Cardiac septum (tissue), 1 donor: ENCODE measurements at regions of chr19 and their contacts with region 1.

Region 1: GRCh38 chr19:41993612-41994483 is at the start of gene ATP1A3:
- DNase-seq: no peak
- total RNA-seq, gene ATP1A3: 242 TPM

Region 2: DNA sequence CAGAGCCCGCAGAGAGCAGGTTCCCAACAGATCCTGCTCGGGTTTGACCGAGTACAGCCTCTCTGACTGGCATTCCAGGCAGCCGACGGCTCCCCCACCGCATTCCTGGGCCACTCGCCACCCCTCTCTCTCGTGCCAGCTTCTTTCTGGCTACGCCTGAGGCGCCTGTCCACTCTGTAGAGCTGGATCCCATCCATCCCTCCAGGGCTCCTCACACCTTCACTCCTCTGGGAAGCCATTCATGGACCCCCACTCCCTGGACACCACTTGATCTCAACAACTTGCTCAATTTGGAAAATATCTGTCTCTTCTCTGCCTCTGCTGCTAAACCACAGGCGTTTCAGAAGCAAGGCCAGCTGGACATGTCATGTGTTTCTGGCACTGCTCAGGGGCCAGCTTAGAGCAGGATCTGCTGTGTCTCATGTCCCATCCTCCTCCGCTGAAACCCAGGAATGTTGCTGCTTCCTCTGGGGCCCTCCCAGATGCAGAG is 30.8 kb after region 1 on chr19:
- intact Hi-C with region 1: loop called (anchors 2 kb)
- DNase-seq: peak; percentile 83

Region 3: GRCh38 chr19:42037649-42038048 is 43.8 kb after region 1 on chr19:
- intact Hi-C with region 1: loop called (anchors 2 kb)
- DNase-seq: no peak

Region 4: DNA sequence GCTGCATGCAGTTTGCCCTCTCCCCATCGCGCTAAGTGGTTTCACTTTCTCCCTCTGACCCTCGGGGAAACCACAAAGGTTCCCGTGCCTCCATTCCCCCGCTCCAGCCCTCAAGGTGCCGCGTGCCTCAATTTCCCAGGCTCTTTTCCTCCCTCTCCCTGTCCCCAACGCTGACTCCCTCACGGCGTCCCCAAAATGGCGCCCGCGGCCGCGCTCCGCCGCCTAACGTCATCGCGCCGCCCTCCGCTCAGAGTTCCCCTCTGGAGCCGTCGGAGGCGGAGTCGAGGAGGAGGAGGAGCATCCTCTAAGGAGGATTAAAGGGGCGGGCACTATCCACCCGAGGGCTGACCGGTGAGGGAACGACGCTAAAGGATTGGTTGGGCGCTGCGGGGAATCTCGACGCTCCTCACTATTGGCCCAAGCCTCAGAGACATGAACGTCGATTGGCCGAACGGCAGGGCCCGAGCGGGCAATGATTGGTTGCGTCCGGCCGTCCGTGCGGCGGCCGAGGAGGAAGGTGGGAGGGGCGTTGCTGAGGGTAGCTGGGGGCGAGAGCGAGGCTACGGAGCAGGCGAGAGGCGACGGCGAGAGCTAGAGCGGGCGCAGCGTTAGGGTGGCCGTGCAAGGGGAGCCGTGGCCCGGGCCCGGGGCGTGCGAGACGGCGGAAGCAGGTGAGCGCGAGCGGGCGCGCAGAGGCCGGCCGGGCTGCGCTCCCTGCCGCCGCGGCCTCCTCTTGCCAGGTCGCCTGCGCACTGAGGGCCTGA is 82.0 kb after region 1 on chr19 and contains the start of gene ZNF574:
- intact Hi-C with region 1: loop called (anchors 5 kb)
- DNase-seq: peak; percentile 99
- total RNA-seq, gene ZNF574: 8.3 TPM

Region 5: GRCh38 chr19:42158926-42159325 is 165.1 kb after region 1 on chr19:
- intact Hi-C with region 1: no loop called
- DNase-seq: no peak